ENCODE measurements at regions of chr3 and their contacts with region 1.

Region 1: GRCh38 chr3:51391075-51391567 is at the start of gene RBM15B:
- DNase-seq: peak; percentile 98
- H3K4me3 Mint-ChIP-seq: peak within 1 kb of the TSS; percentile 85
- H3K27ac Mint-ChIP-seq: peak within 1 kb of the TSS; percentile 86
- H3K4me1 Mint-ChIP-seq: peaks cover 66% of the 10 kb centered on the region
- H3K27me3 Mint-ChIP-seq: no peaks in the 10 kb centered on the region
- total RNA-seq, gene RBM15B: 38.5 and 39.6 TPM in 2 replicates

Region 2: DNA sequence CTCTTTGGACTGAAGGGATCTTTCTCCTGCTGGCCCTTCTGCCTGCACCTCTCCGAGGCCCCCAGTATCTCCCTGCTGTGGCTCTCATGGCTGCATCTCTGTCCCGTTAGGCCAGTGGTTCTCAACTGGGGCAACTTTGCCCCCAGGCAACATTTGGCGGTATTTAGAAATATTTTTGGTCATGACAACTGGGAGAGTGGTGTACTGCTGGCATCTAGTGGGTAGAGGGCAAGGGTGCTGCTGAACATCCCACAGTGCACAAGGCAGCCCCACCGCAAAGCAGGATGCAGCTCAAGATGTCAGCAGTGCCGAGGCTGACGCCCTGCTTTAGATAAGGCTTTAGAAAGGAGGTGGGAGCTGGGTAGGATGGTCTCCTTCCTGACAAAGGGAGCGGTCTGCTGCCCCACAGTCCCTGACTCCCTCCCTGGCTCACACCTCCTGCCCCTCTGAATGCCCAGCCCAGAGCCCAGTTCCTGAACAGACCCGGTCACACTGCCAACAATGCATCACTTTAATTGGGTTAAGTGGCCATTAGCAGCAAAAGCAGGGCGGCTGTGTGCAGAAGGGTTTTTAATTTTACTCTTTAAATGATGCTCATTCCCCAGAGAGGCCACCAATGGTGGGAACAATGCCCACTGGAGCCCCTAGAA is 963.0 kb before region 1 on chr3:
- intact Hi-C with region 1: no loop called
- DNase-seq: no peak
- H3K4me3 Mint-ChIP-seq: no peak overlapping the region
- H3K27ac Mint-ChIP-seq: no peak overlapping the region
- H3K4me1 Mint-ChIP-seq: no peaks in the 10 kb centered on the region
- H3K27me3 Mint-ChIP-seq: peaks cover 2% of the 10 kb centered on the region

Region 3: GRCh38 chr3:51434746-51435327 is 43.7 kb after region 1 on chr3:
- intact Hi-C with region 1: loop called (anchors 2 kb)
- DNase-seq: peak; percentile 34
- H3K4me3 Mint-ChIP-seq: no peak overlapping the region
- H3K27ac Mint-ChIP-seq: no peak overlapping the region
- H3K4me1 Mint-ChIP-seq: peaks cover 10% of the 10 kb centered on the region
- H3K27me3 Mint-ChIP-seq: no peaks in the 10 kb centered on the region

Region 4: GRCh38 chr3:51511000-51511399 is 119.9 kb after region 1 on chr3:
- intact Hi-C with region 1: no loop called
- DNase-seq: no peak
- H3K4me3 Mint-ChIP-seq: no peak overlapping the region
- H3K27ac Mint-ChIP-seq: no peak overlapping the region
- H3K4me1 Mint-ChIP-seq: peaks cover 11% of the 10 kb centered on the region
- H3K27me3 Mint-ChIP-seq: no peaks in the 10 kb centered on the region

Region 5: GRCh38 chr3:51974963-51975851 is 584.1 kb after region 1 on chr3 and contains the start of gene ABHD14A:
- intact Hi-C with region 1: loop called (anchors 10 kb)
- DNase-seq: peak; percentile 72
- H3K4me3 Mint-ChIP-seq: peak within 1 kb of the TSS; percentile 87
- H3K27ac Mint-ChIP-seq: peak within 1 kb of the TSS; percentile 90
- H3K4me1 Mint-ChIP-seq: peaks cover 24% of the 10 kb centered on the region
- H3K27me3 Mint-ChIP-seq: no peaks in the 10 kb centered on the region
- total RNA-seq, gene ABHD14A: 12.8 and 13.3 TPM in 2 replicates

Region 6: DNA sequence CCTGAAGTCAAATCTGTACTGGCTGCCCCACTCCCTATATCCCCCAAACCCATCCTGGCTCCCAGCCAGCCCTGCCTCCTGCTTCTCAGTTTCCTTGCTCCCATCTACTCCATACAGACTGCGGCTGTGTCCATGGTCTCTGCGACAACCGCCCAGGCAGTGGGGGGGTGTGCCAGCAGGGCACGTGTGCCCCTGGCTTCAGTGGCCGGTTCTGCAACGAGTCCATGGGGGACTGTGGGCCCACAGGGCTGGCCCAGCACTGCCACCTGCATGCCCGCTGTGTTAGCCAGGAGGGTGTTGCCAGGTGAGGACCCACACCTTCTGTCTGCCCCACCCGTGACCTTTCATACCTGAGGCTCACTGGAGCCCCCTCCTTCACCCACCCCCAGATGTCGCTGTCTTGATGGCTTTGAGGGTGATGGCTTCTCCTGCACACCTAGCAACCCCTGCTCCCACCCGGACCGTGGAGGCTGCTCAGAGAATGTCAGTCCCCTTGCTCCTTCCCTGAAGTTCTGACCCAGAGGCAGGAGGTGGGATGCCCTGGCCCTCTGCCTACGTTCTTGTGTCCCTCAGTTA is 1118.7 kb after region 1 on chr3:
- intact Hi-C with region 1: no loop called
- DNase-seq: no peak
- H3K4me3 Mint-ChIP-seq: no peak overlapping the region
- H3K27ac Mint-ChIP-seq: no peak overlapping the region
- H3K4me1 Mint-ChIP-seq: no peaks in the 10 kb centered on the region
- H3K27me3 Mint-ChIP-seq: no peaks in the 10 kb centered on the region

Measured in activated T-helper 1 cell treated with anti-CD3 and anti-CD28 coated beads, Interleukin-12 subunit alpha, Interleukin-12 subunit beta, Interleukin-2, Interleukin-4 antibody, amounts not matched to agents 30 ng/mL and 10 ng/mL and 1 ng/mL, durations not matched to agents 14 hours and 24 hours and 36 hours (primary cell).